ENCODE measurements at regions of chr10 and their contacts with region 1.

Region 1: DNA sequence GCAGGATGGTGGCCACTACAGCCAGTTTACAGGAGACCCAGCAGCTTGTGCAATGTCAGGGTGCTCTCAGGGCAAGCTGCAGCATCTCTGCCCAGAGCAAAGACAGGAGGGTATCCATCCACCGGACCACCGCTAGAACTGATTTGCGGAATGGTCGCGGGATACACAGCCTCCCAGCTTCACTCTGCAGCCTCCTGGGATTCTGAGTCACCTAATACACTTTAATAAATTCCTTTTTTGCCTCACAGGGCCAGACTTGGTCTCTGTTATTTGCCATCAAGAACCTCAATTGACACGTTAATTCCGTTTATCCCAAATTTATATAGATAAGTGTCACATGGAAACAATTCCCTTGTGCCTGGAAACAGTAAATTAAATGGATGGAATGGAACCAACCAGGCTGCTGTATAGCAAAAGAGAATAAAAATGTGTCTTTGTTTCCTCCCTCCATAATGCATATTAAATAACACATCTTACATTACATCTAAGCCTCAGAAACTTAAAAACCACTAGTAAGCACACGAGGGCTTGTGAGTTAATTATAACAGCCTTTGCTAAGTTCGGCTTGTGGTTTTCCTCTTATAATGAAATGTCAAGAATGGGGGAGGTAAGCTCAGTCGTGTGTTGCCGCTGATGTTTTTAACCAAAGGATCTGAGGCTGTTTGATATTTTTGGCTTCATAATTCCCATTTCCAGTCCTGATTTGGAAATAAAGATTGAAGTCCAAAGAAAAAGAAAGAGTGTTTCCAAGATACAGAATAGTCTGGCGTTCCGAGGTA is 52.1 kb downstream of the ADRB1 start:
- DNase-seq: no peak
- ATAC-seq: no peak
- H3K4me3 ChIP-seq: no peak overlapping the region
- H3K27ac ChIP-seq: no peak overlapping the region
- H3K4me1 ChIP-seq: peaks cover 0 to 30% (median 5%) of the 10 kb centered on the region in 9 donors
- H3K27me3 ChIP-seq: peaks cover 0 to 8% (median 0%) of the 10 kb centered on the region in 7 donors
- CTCF ChIP-seq: no peak

Region 2: GRCh38 chr10:113802997-113803396 is 292.8 kb before region 1 on chr10:
- intact Hi-C with region 1: loop called in 5 of 10 experiments (anchors 2 to 5 kb)
- DNase-seq: no peak
- ATAC-seq: no peak
- H3K4me3 ChIP-seq: no peak overlapping the region
- H3K27ac ChIP-seq: no peak overlapping the region
- H3K4me1 ChIP-seq: no peaks in the 10 kb centered on the region
- H3K27me3 ChIP-seq: peaks cover 0 to 10% (median 0%) of the 10 kb centered on the region in 7 donors
- CTCF ChIP-seq: no peak

Region 3: GRCh38 chr10:113897693-113898618 is 197.8 kb before region 1 on chr10:
- intact Hi-C with region 1: loop called in 3 of 10 experiments (anchors 10 kb)
- DNase-seq: peak; percentile 24 to 25
- ATAC-seq: peak in 7 of 8 donors; percentile 58 to 85 (median 77)
- H3K4me3 ChIP-seq: no peak overlapping the region
- H3K27ac ChIP-seq: peak overlapping the region in 6 of 10 donors; percentile 9 to 48 (median 18)
- H3K4me1 ChIP-seq: peaks cover 0 to 52% (median 20%) of the 10 kb centered on the region in 9 donors
- H3K27me3 ChIP-seq: no peaks in the 10 kb centered on the region
- CTCF ChIP-seq: no peak

Region 4: DNA sequence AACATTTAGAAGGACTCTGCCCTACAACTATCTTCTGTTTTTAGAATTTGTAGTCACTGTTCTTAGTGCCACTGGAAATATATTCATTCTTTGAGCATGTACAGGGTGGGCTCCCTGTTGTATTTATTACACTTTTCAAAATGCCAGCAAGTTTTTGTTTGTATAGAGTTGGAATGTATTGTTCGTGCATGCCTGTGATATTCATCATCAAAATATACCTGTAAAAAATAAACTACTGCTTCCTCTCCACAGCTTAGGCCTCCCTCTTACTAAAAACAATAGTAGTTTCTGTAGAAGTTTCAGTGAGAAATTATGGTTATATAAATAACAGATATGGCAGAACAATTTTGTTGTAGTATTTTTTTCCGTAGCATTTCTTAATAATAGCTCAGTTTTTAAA is 179.7 kb before region 1 on chr10:
- intact Hi-C with region 1: loop called in 1 of 10 experiments (anchors 10 kb)
- DNase-seq: no peak
- ATAC-seq: no peak
- H3K4me3 ChIP-seq: no peak overlapping the region
- H3K27ac ChIP-seq: no peak overlapping the region
- H3K4me1 ChIP-seq: peaks cover 0 to 6% (median 0%) of the 10 kb centered on the region in 9 donors
- H3K27me3 ChIP-seq: no peaks in the 10 kb centered on the region
- CTCF ChIP-seq: no peak